Activated B cell treated with CpG ODN at 0.5 μM for 24 hours (primary cell): ENCODE measurements at regions of chr5 and their contacts with region 1.

Region 1: DNA sequence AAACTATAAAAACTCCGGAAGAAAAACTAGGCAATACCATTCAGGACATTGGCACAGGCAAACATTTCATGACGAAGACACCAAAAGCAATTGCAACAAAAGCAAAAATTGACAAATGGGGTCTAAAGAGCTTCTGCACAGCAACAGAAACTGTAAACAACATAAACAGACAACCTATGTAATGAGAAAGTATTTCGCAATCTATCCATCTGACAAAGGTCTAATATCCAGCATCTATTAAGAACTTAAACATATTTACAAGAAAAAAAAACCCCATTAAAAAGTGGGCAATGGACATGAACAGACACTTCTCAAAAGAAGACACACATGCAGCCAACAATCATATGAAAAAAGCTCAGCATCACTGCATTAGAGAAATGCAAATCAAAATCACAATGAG is 498.6 kb downstream of the HINT1 start:
- DNase-seq: no peak
- ATAC-seq: no peak
- H3K4me3 Mint-ChIP-seq: no peak overlapping the region
- H3K27ac Mint-ChIP-seq: no peak overlapping the region
- H3K4me1 Mint-ChIP-seq: no peaks in the 10 kb centered on the region
- H3K27me3 Mint-ChIP-seq: no peaks in the 10 kb centered on the region
- CTCF ChIP-seq: no peak

Region 2: GRCh38 chr5:130715541-130715940 is 49.1 kb after region 1 on chr5:
- CTCF ChIA-PET with region 1: no interaction called
- POLR2A ChIA-PET with region 1: no interaction called
- intact Hi-C with region 1: loop called (anchors 2 kb)
- DNase-seq: no peak
- ATAC-seq: no peak
- H3K4me3 Mint-ChIP-seq: no peak overlapping the region
- H3K27ac Mint-ChIP-seq: no peak overlapping the region
- H3K4me1 Mint-ChIP-seq: no peaks in the 10 kb centered on the region
- H3K27me3 Mint-ChIP-seq: peaks cover 3% of the 10 kb centered on the region
- CTCF ChIP-seq: no peak